Lower lobe of right lung (tissue), 2 donors: ENCODE measurements at regions of chr10 and their contacts with region 1.

Region 1: GRCh38 chr10:131885391-131886161 is 15.2 kb upstream of the PPP2R2D start:
- DNase-seq: peak; percentile 82
- ATAC-seq: peak; percentile 96 to 98
- H3K4me3 ChIP-seq: no peak overlapping the region
- H3K27ac ChIP-seq: no peak overlapping the region
- H3K4me1 ChIP-seq: peaks cover 7% of the 10 kb centered on the region
- H3K27me3 ChIP-seq: peaks cover 6% of the 10 kb centered on the region
- CTCF ChIP-seq: peak; percentile 99

Region 2: DNA sequence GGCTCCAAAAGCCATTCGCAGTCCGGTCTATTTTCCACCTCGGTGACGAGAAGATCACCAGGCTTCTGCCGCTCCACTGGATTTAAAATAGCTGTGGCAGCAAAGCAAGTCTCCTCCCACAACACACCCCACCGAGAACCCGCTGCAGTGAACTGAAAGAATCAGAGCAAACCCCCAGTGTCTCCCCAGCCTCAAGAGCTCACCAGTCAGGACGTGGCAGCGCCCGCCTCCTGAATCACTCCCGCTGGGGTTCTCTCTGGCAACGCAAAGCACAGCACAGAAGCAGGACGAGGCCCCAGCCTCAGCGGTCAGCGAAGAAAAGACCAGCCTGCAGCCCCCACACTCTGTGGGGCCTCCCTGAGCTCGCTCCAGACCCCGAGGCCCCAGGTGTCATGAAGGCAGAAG is 110.9 kb before region 1 on chr10:
- intact Hi-C with region 1: no loop called
- DNase-seq: no peak
- ATAC-seq: no peak
- H3K4me3 ChIP-seq: no peak overlapping the region
- H3K27ac ChIP-seq: no peak overlapping the region
- H3K4me1 ChIP-seq: no peaks in the 10 kb centered on the region
- H3K27me3 ChIP-seq: no peaks in the 10 kb centered on the region
- CTCF ChIP-seq: no peak

Region 3: DNA sequence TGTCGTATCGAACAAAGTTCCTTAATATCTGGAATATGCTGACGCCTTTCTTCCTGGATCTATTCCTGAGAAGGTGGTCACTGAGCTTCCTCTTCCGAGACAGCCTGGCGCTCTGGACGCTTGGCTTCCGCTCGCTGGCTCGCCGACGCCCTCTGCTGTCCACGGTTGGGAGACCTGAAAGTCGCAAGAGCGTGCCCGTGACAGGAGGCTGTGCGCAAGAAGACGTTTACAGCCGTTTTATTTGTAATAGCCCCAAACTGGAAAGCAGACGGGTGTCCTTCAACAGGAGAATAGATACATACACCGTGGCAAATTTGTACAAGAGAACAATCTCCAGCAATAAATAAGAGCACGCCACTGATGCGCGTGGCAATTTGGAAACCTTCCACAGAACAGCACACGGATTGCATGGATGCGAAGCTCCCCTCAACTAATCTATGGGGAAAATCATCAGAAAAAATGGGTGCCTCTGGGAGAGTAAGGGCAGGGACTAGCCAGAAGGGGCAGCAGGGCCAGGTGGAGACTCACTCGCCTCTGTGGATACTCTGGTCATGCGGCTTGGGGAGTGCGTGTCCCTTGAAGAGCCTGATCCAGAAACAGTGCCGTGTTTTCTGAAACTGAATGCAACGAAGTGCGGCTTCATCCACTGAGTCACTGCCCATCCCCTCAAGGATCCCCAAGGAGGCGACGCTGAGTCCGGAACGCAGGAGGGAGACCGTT is 137.7 kb after region 1 on chr10:
- intact Hi-C with region 1: loop called (anchors 5 kb)
- DNase-seq: peak; percentile 88
- ATAC-seq: peak; percentile 91 to 94
- H3K4me3 ChIP-seq: peak overlapping the region; percentile 41
- H3K27ac ChIP-seq: no peak overlapping the region
- H3K4me1 ChIP-seq: peaks cover 14% of the 10 kb centered on the region
- H3K27me3 ChIP-seq: peaks cover 42% of the 10 kb centered on the region
- CTCF ChIP-seq: peak; percentile 90

Region 4: GRCh38 chr10:132142411-132143161 is 257.0 kb after region 1 on chr10:
- intact Hi-C with region 1: loop called (anchors 10 kb)
- DNase-seq: peak; percentile 47
- ATAC-seq: peak; percentile 72 to 75
- H3K4me3 ChIP-seq: no peak overlapping the region
- H3K27ac ChIP-seq: no peak overlapping the region
- H3K4me1 ChIP-seq: no peaks in the 10 kb centered on the region
- H3K27me3 ChIP-seq: peaks cover 26% of the 10 kb centered on the region
- CTCF ChIP-seq: peak; percentile 83

Region 5: DNA sequence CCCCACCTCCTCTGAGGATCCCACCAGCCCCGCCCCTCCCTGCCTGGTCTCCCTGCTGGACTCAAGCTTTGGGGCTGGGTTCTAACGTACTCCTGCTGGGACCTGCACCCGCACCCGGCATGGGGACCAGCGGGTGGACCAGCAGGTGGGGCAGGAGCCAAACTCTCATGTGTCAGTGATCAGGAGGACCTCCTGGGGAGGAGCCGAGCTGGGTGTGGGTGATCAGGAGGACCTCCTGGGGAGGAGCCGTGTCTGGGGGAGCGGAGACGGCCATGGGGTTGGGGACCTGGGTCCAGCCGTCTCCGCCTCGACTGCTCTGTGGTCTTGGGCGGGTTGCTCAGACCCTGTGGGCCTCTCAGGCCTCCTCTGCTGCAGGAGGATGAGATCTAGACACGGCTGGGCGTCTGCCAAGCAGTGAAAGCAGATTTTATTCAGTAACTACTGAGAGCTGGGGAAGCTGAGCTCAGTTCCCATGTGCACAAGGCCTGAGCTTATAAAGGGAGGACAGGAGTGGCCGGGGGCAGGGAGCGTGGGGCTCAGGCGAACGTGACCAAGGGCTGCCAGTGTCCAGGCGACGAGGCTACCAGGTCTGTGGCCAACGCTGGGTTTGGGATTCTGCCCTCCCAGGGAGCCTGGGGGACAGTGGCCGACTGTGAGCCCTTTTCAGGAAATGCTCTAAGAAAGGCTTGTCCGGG is 1310.8 kb after region 1 on chr10:
- intact Hi-C with region 1: no loop called
- DNase-seq: no peak
- ATAC-seq: no peak
- H3K4me3 ChIP-seq: no peak overlapping the region
- H3K27ac ChIP-seq: no peak overlapping the region
- H3K4me1 ChIP-seq: no peaks in the 10 kb centered on the region
- H3K27me3 ChIP-seq: no peaks in the 10 kb centered on the region
- CTCF ChIP-seq: no peak